ENCODE measurements at regions of chr12 and their contacts with region 1.

Region 1: GRCh38 chr12:82817368-82817767 is 130.7 kb downstream of the TMTC2 start:
- DNase-seq: no peak
- ATAC-seq: no peak
- H3K4me3 ChIP-seq: no peak overlapping the region
- H3K27ac ChIP-seq: no peak overlapping the region
- H3K4me1 ChIP-seq: no peaks in the 10 kb centered on the region
- H3K27me3 ChIP-seq: no peaks in the 10 kb centered on the region
- CTCF ChIP-seq: no peak
- EP300 ChIP-seq: no peak
- POLR2A ChIP-seq: no peak
- RAD21 ChIP-seq: no peak

Region 2: DNA sequence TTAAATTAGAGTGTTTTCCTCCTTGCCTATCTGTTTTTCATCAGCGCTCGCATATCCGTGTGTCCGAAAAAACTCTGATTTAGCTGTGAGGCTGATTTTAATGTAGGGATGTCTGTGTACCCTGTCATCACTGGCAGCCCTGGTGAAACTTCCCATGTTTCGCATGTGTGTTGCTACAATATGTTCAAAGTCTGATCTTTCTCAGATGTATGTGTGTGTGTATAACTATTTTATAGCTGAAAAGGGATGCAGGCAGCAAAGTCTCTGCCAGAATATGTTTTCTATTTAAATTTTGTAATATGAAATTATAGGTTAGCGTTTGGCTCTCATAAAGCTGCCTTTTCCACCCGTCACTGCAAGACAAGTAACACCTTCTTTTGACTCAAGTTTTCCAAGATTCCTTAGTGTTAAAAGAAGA is 24.1 kb after region 1 on chr12:
- CTCF ChIA-PET with region 1: no interaction called
- POLR2A ChIA-PET with region 1: interaction called, 11 read pairs
- RAD21 ChIA-PET with region 1: no interaction called
- SMC1A ChIA-PET with region 1: no interaction called
- in situ Hi-C with region 1: no loop called
- intact Hi-C with region 1: no loop called
- DNase-seq: no peak
- ATAC-seq: no peak
- H3K4me3 ChIP-seq: no peak overlapping the region
- H3K27ac ChIP-seq: no peak overlapping the region
- H3K4me1 ChIP-seq: no peaks in the 10 kb centered on the region
- H3K27me3 ChIP-seq: no peaks in the 10 kb centered on the region
- CTCF ChIP-seq: no peak
- EP300 ChIP-seq: no peak
- POLR2A ChIP-seq: no peak
- RAD21 ChIP-seq: no peak